WTC11 (cell line): ENCODE measurements at regions of chr14 and their contacts with region 1.

Region 1: GRCh38 chr14:95665156-95665948 is 20.9 kb upstream of the TCL1B start:
- DNase-seq: peak; percentile 28
- ATAC-seq: peak; percentile 69
- H3K4me3 Mint-ChIP-seq: no peak overlapping the region
- H3K27ac Mint-ChIP-seq: no peak overlapping the region
- H3K4me1 Mint-ChIP-seq: peaks cover 34% of the 10 kb centered on the region
- H3K27me3 Mint-ChIP-seq: peaks cover 29% of the 10 kb centered on the region
- CTCF ChIP-seq: no peak

Region 2: DNA sequence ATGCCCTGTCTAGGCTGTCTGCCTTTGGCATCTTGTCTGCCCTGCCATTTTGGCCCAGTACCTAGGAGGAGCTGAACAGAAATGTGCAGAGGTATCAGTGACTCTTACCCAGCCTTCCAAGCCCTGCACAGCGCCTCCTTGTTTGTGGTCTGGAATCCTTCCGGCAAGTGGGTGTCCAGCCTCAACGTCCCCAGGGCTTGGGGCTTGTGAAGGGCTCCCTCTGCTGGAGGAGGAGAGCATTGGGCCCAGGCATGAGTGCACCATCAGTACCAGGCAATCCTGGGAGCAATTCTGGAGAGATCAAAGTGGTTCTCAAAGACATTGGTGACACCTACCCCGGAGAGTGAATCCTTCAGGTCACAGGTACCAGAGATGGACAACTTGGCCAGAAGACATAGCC is 18.4 kb after region 1 on chr14:
- CTCF ChIA-PET with region 1: interaction called, 16 read pairs
- POLR2A ChIA-PET with region 1: no interaction called
- DNase-seq: peak; percentile 75
- ATAC-seq: peak; percentile 83
- H3K4me3 Mint-ChIP-seq: no peak overlapping the region
- H3K27ac Mint-ChIP-seq: no peak overlapping the region
- H3K4me1 Mint-ChIP-seq: peaks cover 35% of the 10 kb centered on the region
- H3K27me3 Mint-ChIP-seq: peaks cover 12% of the 10 kb centered on the region
- CTCF ChIP-seq: peak; percentile 67; the same call in 1 of the 2 replicates

Region 3: GRCh38 chr14:95758331-95758730 is 93.0 kb after region 1 on chr14:
- CTCF ChIA-PET with region 1: no interaction called
- POLR2A ChIA-PET with region 1: no interaction called
- DNase-seq: no peak
- ATAC-seq: no peak
- H3K4me3 Mint-ChIP-seq: no peak overlapping the region
- H3K27ac Mint-ChIP-seq: no peak overlapping the region
- H3K4me1 Mint-ChIP-seq: peaks cover 19% of the 10 kb centered on the region
- H3K27me3 Mint-ChIP-seq: peaks cover 3% of the 10 kb centered on the region; the same call in 1 of the 2 replicates
- CTCF ChIP-seq: no peak

Region 4: GRCh38 chr14:95835331-95835730 is 170.0 kb after region 1 on chr14:
- CTCF ChIA-PET with region 1: no interaction called
- POLR2A ChIA-PET with region 1: no interaction called
- DNase-seq: no peak
- ATAC-seq: no peak
- H3K4me3 Mint-ChIP-seq: no peak overlapping the region
- H3K27ac Mint-ChIP-seq: no peak overlapping the region
- H3K4me1 Mint-ChIP-seq: peaks cover 29% of the 10 kb centered on the region
- H3K27me3 Mint-ChIP-seq: peaks cover 2% of the 10 kb centered on the region; the same call in 1 of the 2 replicates
- CTCF ChIP-seq: no peak